Heart right ventricle (tissue), 16 donors: ENCODE measurements at regions of chr1 and their contacts with region 1.

Region 1: GRCh38 chr1:62057641-62058295 is 136.9 kb upstream of the L1TD1 start:
- DNase-seq: no peak
- ATAC-seq: peak in 2 of 8 donors; percentile 29 to 38
- H3K4me3 ChIP-seq: no peak overlapping the region
- H3K27ac ChIP-seq: peak overlapping the region in 2 of 10 donors; percentile 32 to 54
- H3K4me1 ChIP-seq: peaks cover 0 to 27% (median 0%) of the 10 kb centered on the region in 9 donors
- H3K27me3 ChIP-seq: no peaks in the 10 kb centered on the region
- CTCF ChIP-seq: no peak

Region 2: GRCh38 chr1:61270761-61271411 is 786.9 kb before region 1 on chr1:
- intact Hi-C with region 1: no loop called
- DNase-seq: no peak
- ATAC-seq: no peak
- H3K4me3 ChIP-seq: no peak overlapping the region
- H3K27ac ChIP-seq: no peak overlapping the region
- H3K4me1 ChIP-seq: peaks cover 0 to 46% (median 21%) of the 10 kb centered on the region in 9 donors
- H3K27me3 ChIP-seq: no peaks in the 10 kb centered on the region
- CTCF ChIP-seq: no peak

Region 3: GRCh38 chr1:61865646-61866231 is 192.0 kb before region 1 on chr1:
- intact Hi-C with region 1: loop called in 3 of 10 experiments (anchors 10 kb)
- DNase-seq: peak in 1 of 2 donors; percentile 14
- ATAC-seq: peak; percentile 16 to 92 (median 74)
- H3K4me3 ChIP-seq: no peak overlapping the region
- H3K27ac ChIP-seq: peak overlapping the region in 7 of 10 donors; percentile 1 to 44 (median 30)
- H3K4me1 ChIP-seq: peaks cover 0 to 13% (median 0%) of the 10 kb centered on the region in 9 donors
- H3K27me3 ChIP-seq: no peaks in the 10 kb centered on the region
- CTCF ChIP-seq: no peak

Region 4: GRCh38 chr1:62082456-62083363 is 24.9 kb after region 1 on chr1:
- intact Hi-C with region 1: no loop called
- DNase-seq: peak in 1 of 2 donors; percentile 15
- ATAC-seq: peak in 3 of 8 donors; percentile 39 to 68 (median 58)
- H3K4me3 ChIP-seq: no peak overlapping the region
- H3K27ac ChIP-seq: no peak overlapping the region
- H3K4me1 ChIP-seq: peaks cover 0 to 15% (median 6%) of the 10 kb centered on the region in 9 donors
- H3K27me3 ChIP-seq: no peaks in the 10 kb centered on the region
- CTCF ChIP-seq: peak; percentile 66 to 93 (median 89)

Region 5: DNA sequence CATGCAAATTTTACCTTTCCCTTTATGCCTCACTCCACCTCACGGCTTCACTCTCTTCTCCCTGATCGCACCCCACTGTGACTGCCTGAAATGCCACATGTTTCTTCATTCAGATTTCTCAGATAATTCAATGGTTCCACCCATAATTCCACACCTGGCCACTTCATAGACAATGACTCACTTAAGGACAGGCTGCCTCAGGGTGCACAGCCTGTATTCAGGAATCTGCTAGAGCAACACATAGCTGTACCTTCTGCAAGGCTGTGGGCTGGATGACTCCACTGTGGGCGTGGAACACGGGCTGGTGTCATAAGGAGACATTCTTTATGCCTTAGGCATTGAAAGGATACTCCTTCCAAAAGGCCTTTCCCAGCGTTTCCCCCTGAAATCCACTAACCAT is 172.9 kb after region 1 on chr1:
- intact Hi-C with region 1: no loop called
- DNase-seq: no peak
- ATAC-seq: no peak
- H3K4me3 ChIP-seq: no peak overlapping the region
- H3K27ac ChIP-seq: no peak overlapping the region
- H3K4me1 ChIP-seq: peaks cover 0 to 6% (median 0%) of the 10 kb centered on the region in 9 donors
- H3K27me3 ChIP-seq: peaks cover 0 to 8% (median 0%) of the 10 kb centered on the region in 7 donors
- CTCF ChIP-seq: no peak